ENCODE measurements at regions of chrX and their contacts with region 1.

Region 1: GRCh38 chrX:72276478-72276953 is 532 bp downstream of the RPS4X start:
- DNase-seq: no peak
- H3K4me3 ChIP-seq: peak overlapping the region; percentile 87 to 97
- H3K27ac ChIP-seq: peak overlapping the region; percentile 75 to 94
- H3K4me1 ChIP-seq: peaks cover 30 to 33% of the 10 kb centered on the region in 2 experiments; a peak in 3 of 4 replicates
- H3K27me3 ChIP-seq: no peaks in the 10 kb centered on the region
- CTCF ChIP-seq: no peak
- EP300 ChIP-seq: no peak
- RAD21 ChIP-seq: no peak

Region 2: DNA sequence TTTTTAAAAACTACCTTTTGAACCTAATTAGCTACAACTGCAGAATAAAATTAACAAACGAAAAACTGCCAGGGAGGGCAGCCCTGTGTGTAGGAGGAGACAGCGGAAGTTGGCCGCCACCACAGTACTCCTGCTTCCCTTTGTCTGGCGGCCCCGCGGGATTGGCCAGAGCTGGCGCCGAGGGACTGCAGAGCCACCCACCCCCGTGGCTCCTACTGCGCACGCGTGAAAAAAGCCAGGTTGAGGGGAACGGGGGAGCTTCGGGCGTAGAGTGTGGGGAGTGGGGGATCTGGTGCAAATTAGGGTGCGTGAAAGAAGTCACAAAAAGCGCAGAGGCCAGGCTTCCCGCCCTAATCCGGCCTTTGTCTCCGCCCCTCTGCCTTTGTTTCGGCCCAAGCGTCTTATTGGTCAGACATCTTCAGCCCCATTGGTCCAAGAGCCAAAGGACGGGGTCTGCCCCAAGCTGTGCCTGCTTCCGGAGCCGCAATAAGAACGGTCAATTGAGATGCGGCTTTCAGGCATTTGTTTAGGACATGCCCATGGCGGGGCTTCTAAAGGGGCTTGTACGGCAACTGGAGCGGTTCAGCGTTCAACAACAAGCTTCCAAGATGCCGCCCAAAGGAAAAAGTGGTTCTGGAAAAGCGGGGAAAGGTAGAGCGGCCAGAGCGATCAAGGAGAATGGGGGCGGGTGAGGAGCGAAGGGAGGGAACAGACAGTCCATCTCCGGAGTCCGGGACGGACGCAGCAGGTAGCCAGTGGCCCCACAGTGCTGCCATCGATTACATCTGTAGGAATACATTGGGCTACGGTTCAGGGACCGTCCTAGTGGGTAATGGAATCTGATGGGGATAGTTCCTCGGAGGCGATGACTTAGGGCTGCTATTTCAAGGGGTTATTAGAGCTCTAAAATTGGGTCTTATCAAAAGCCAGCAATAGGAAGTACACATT is 95.1 kb before region 1 on chrX and contains the start of gene PIN4:
- CTCF ChIA-PET with region 1: interaction called, 6 read pairs
- POLR2A ChIA-PET with region 1: interaction called, 24 read pairs
- DNase-seq: peak; percentile 94
- H3K4me3 ChIP-seq: peak within 1 kb of the TSS; percentile 94 to 99
- H3K27ac ChIP-seq: peak within 1 kb of the TSS; percentile 76 to 99
- H3K4me1 ChIP-seq: peaks cover 2 to 10% of the 10 kb centered on the region in 2 experiments; a peak in 2 of 4 replicates
- H3K27me3 ChIP-seq: no peaks in the 10 kb centered on the region
- CTCF ChIP-seq: no peak
- EP300 ChIP-seq: no peak; a peak in 1 of 4 replicates
- RAD21 ChIP-seq: no peak
- polyA plus RNA-seq, gene PIN4: 22.3 and 29.8 TPM in 2 replicates

Region 3: DNA sequence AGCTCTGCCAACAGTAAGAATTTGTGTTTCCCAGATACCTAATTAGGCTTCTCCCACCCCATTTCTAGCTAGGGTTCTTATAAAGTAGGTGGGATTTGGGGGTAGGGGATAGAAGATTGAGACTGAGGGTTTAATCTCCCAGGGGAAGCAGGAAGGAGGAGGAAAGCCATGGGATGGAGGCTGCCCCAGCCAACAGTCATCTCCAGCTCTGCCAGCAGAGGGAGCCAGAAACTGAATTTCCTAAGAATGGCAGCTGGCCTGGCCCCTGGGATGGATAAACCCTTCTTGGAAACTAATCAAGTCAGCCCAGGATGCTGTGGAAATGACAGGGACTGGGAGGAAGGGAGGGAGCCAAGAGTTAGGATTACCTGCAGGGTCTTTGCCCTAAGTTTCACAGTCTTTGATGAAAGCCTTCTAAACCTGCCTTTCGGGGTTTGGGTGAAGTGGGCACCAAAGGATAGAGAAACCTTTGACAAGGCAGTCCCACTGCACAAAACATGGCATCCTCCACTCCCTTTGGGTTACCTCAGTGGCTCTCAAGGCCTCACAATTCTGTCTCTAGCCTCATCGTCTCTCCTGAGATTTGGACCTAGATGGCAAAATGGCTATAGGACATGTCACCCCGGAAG is 30.9 kb before region 1 on chrX:
- CTCF ChIA-PET with region 1: interaction called, 22 read pairs
- POLR2A ChIA-PET with region 1: interaction called, 3 read pairs
- DNase-seq: peak; percentile 79
- H3K4me3 ChIP-seq: peak overlapping the region in 1 of 2 experiments; percentile 34; a peak in 1 of 4 replicates
- H3K27ac ChIP-seq: no peak overlapping the region
- H3K4me1 ChIP-seq: peaks cover 2 to 4% of the 10 kb centered on the region in 2 experiments; a peak in 2 of 4 replicates
- H3K27me3 ChIP-seq: no peaks in the 10 kb centered on the region
- CTCF ChIP-seq: peak; percentile 86
- EP300 ChIP-seq: no peak
- RAD21 ChIP-seq: peak; percentile 84

Region 4: DNA sequence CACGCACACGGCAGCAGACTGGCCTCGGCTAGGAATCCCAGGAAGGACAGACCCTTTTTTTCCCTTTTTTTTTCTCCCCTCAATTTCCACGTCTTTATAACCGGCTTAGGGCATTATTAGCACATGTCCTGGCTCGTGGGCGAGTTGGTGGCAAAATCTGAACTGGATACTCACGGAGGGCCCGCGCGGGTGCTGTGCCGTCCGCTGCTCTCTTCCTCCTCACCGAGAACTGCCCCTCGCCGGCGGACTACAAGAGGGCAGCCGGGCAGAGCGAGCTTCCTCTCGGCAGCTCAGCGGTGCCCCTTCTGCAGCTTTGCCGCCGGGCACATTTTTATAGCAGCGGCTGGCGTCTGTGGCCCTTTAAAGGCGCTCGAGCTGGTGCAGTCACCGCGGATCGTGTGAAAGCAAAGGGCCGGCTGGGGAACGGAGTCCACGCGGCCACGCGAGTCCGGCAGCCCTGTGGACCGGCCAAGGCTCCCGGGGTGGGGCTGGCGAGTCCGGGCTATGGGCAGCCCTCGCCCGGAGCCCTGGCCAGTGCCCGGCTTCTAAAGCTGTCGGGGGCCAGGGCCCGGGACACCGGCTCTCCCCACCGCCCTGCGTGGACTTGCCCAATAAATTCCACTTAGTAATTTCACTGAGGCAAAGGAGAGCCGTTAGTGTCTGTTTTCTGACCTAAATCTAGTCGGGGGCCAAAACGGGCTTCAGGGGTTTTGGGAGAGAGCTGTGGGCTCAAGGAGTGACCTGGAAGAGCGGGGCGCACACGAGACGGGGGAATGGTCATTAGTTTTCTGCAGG is 30.5 kb after region 1 on chrX:
- CTCF ChIA-PET with region 1: interaction called, 12 read pairs
- POLR2A ChIA-PET with region 1: interaction called, 20 read pairs
- DNase-seq: peak; percentile 87
- H3K4me3 ChIP-seq: peak overlapping the region; percentile 50 to 70
- H3K27ac ChIP-seq: no peak overlapping the region; a peak in 1 of 4 replicates
- H3K4me1 ChIP-seq: peaks cover 0 to 30% of the 10 kb centered on the region in 2 experiments; a peak in 1 of 4 replicates
- H3K27me3 ChIP-seq: peaks cover 58% of the 10 kb centered on the region
- CTCF ChIP-seq: no peak
- EP300 ChIP-seq: no peak
- RAD21 ChIP-seq: no peak; the same call in 1 of the 2 replicates

Region 5: DNA sequence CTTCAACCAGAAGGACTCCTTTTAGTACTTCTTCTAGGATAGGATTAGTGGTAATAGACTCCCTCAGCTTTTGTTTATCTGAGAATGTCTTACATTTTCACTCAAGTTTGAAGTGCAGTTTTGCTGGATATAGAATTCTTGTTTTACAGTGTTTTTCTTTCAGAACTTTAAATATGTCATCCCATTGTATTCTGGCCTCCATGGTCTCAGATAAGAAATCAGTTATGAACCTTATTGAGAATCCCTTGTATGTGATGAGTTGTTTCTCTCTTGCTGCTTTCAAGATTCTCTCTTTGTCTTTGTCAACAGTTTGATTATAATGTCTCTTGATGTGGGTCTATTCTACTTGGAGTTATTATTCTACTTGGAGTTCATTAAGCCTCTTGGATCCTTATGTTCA is 145.3 kb after region 1 on chrX:
- CTCF ChIA-PET with region 1: no interaction called
- POLR2A ChIA-PET with region 1: no interaction called
- DNase-seq: no peak
- H3K4me3 ChIP-seq: no peak overlapping the region
- H3K27ac ChIP-seq: no peak overlapping the region
- H3K4me1 ChIP-seq: no peaks in the 10 kb centered on the region
- H3K27me3 ChIP-seq: no peaks in the 10 kb centered on the region
- CTCF ChIP-seq: no peak
- EP300 ChIP-seq: no peak
- RAD21 ChIP-seq: no peak

Measured in SK-N-SH (cell line).